ENCODE measurements at regions of chr10 and their contacts with region 1.

Region 1: DNA sequence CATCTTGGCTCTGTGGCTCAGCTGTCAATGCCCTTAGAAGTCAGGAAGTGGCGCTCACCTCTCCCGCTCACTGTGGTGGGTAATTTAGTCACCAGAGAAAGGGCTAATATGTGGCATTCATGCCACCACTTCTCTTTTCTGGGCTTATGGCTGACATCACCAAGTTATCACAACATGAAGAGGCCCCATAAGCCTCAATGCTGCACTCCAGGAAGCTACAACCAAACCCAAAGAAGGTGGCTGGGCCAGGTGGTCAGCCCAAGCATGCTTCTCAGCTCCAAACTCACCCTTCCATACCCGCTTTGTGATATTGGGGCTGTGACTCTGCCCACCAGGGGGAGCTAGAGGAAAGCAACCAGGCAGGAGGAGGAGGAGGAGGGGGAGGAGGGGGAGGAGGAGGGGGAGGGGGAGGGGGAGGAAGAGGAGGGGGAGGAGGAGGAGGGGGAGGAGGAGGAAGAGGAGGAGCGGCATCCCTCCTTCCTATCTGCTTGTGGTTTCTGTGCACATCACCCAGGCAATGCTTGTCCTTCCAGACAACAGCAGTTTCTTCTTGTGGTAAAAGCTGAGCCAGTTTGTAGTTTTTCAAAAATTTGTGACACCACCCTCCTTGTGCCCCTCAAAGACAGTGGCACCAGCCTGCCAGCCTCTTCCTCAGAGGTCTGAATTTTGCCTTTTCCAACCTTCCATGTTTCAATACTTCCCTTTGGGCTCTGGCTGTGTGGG is 42.1 kb downstream of the CYP26A1 start:
- DNase-seq: peak; percentile 79

Region 2: DNA sequence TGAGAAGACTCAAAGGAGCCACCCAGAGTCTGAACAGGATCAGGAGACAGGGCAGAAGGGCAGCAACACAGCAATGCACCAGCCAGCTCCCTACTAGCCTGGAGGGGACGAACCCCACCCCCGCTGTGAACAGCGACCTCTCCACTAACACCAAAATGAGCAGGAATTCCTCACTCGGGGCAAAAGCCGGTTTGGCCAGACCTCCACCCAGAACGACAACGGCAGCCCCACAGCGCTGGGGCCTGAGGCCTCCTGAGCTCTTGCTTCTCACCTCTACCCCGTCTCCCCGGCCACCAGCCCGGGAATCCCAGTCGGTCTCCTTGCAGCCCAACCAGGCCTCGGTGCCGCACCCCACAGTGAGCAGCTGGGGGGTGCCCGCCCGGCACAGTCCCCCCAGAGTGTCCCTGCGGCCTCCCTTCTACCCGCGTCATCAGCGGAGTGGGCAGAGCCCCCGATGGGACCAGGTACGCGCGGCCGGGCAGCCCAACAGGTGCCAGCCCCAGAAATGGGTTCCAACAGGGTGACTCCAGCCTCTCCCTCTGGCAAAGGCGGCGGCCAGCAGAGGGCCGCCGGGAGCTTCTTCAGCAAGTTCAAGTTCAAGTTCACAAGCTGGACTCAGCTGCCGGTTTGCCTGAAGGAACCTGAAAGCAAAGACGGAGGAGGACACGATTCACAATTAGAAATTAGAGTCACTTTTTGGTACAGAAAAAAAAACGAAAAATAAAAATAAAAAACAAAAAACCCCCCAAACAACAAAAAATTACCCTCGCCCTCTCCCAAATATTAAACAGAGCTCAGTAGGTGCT is 695.9 kb before region 1 on chr10:
- intact Hi-C with region 1: no loop called
- DNase-seq: no peak

Region 3: GRCh38 chr10:93080350-93081046 is 35.3 kb before region 1 on chr10:
- intact Hi-C with region 1: loop called (anchors 2 kb)
- DNase-seq: peak; percentile 80

Measured in cardiac septum (tissue), 1 donor.